ENCODE measurements at regions of chr20 and their contacts with region 1.

Region 1: DNA sequence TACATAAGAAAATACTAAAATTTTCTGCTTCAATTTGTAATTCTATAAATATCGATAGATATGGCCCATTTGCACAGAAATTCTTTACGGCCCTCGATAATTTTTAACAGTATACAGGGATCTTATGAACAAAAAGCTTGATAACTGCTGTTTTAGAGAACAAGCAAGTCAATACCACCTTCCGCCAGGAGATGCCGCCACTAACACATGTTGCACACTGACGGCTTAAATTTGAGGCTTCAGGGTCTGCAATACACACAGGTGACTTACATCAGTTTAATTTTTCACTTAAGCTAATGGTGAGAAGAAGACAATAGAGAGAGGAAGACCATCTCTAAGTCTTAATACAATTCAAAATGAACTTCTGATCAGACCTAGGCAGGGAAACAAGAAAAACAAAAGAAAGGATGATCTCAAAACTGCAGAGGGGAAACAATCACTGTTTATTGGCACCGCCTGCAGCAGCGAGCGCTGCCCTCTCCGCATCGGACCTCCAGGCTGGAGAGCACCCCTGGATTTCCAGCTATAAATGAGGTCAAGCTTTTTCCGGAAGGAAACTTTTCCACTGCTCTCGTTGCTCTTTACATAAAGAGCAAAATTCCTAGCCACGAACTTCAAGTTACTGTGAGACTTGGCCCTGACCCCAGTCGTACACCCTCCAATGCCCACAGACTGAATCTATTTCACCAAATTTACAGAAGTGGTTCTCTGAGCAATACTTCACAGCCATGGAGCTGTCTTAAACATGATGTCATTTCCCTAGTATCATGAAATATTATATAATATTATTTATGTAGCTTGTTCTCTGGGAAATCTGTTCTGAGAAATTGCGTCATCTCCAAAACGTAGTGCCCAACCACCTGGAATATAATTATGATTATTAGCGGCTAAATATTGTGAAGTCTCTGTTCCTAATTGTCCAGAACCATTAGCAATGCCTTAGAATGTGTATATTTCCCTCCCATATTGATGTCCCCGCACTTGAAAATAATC is 54.1 kb downstream of the OTOR start:
- DNase-seq: peak; percentile 49 to 93
- H3K4me3 ChIP-seq: no peak overlapping the region
- H3K27ac ChIP-seq: no peak overlapping the region
- H3K4me1 ChIP-seq: no peaks in the 10 kb centered on the region
- H3K27me3 ChIP-seq: no peaks in the 10 kb centered on the region
- CTCF ChIP-seq: peak; percentile 63 to 81 (median 78)
- EP300 ChIP-seq: no peak
- POLR2A ChIP-seq: no peak
- RAD21 ChIP-seq: peak; percentile 92 to 94

Region 2: DNA sequence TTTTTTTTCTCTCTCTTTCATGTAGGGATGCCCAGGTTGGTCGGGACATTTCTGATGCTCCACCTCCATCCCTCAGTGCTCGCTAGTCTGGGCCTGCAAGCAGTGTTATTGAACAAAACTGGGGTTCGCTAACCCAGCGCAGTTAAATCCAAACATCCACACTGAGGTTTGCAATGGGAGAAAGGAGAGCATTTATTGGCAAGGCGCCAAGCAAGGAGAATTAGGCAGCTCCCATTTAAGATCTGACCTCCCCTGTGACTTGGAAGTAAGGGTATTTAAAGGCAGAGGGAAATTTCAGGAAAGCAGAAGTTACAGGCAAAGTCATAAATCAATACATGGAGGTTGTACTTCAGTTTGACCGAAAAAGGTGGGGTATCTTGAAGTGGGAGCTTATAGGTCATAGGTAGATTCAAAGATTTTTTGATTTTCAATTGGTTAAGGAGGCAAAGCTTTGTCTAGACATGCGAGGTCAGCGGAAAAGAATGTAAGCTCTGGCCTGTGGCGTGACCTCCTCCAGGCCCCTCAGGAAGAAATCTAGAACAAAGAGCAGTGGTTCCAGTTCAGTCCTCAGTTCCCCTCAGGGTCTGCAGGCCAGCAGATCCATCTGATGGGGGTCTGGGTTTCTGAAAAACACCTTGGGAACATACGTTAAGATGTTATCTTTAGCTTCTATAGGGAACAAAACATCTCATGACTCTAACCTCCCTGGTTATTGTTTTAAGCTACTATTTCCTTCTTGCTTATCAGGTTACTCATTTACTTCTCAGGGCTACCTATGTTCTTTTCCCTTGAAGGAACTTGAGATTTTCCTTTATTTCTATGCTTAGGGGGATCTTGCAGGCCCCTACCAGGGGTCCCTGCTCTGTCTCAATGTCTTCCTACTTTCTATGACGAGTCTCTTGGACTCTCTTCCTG is 162.9 kb before region 1 on chr20:
- CTCF ChIA-PET with region 1: no interaction called
- POLR2A ChIA-PET with region 1: no interaction called
- DNase-seq: no peak
- H3K4me3 ChIP-seq: no peak overlapping the region
- H3K27ac ChIP-seq: no peak overlapping the region
- H3K4me1 ChIP-seq: no peaks in the 10 kb centered on the region
- H3K27me3 ChIP-seq: no peaks in the 10 kb centered on the region
- CTCF ChIP-seq: no peak
- EP300 ChIP-seq: no peak
- POLR2A ChIP-seq: no peak
- RAD21 ChIP-seq: no peak

Region 3: DNA sequence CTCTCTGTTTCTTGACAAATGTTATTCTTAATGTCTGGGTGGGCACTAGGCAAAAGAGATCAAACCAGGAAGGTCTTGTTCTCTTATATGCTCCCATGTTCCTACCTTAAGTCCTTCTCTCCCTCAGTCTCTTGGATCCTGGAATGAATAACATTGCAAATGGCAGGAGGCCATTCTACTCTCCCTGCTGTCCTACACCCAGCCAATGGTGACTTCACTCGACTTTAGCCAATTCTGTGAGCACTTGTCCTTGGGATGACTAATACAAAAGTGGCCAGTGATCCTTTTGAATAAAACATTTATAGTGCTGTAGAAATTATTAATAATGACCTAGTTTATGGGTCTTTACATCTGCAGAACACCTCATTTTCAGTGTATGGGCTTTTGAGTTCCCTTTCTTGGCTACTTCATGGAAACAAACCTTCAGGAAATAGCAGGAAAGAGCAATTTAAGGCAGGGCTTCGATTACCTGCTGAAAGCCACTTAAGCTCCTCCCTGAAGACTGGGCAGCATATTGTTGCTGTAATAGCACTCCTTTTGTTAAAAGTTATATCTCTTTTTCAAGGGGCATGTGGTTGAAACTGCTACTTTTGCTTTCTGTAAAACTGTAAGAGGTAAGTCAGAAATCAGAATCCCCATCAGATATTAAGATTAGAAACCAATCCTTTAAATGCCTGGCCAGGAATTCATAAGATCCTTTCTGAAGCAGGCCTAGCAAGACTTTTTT is 43.6 kb before region 1 on chr20:
- CTCF ChIA-PET with region 1: no interaction called
- POLR2A ChIA-PET with region 1: no interaction called
- DNase-seq: no peak
- H3K4me3 ChIP-seq: no peak overlapping the region
- H3K27ac ChIP-seq: no peak overlapping the region
- H3K4me1 ChIP-seq: peaks cover 0 to 10% (median 2%) of the 10 kb centered on the region in 4 experiments; a peak in 2 of 7 replicates
- H3K27me3 ChIP-seq: no peaks in the 10 kb centered on the region
- CTCF ChIP-seq: no peak
- EP300 ChIP-seq: no peak
- POLR2A ChIP-seq: no peak
- RAD21 ChIP-seq: no peak

Region 4: GRCh38 chr20:16816192-16816591 is 14.0 kb after region 1 on chr20:
- CTCF ChIA-PET with region 1: interaction called, 133 read pairs
- POLR2A ChIA-PET with region 1: no interaction called
- DNase-seq: peak; percentile 10 to 54
- H3K4me3 ChIP-seq: no peak overlapping the region
- H3K27ac ChIP-seq: no peak overlapping the region
- H3K4me1 ChIP-seq: peaks cover 0 to 8% (median 2%) of the 10 kb centered on the region in 4 experiments; a peak in 2 of 7 replicates
- H3K27me3 ChIP-seq: no peaks in the 10 kb centered on the region
- CTCF ChIP-seq: peak; percentile 14 to 48 (median 32); a peak in 3 of 4 replicates
- EP300 ChIP-seq: no peak
- POLR2A ChIP-seq: no peak
- RAD21 ChIP-seq: peak; percentile 34 to 50; a peak in 3 of 4 replicates

Region 5: GRCh38 chr20:17226410-17227218 is 424.4 kb after region 1 on chr20 and contains the start of gene PCSK2:
- CTCF ChIA-PET with region 1: interaction called, 16 read pairs
- POLR2A ChIA-PET with region 1: no interaction called
- DNase-seq: peak; percentile 60 to 88
- H3K4me3 ChIP-seq: peak within 1 kb of the TSS; percentile 46 to 72 (median 66)
- H3K27ac ChIP-seq: no peak within 1 kb of the TSS
- H3K4me1 ChIP-seq: peaks cover 3 to 16% (median 11%) of the 10 kb centered on the region in 4 experiments
- H3K27me3 ChIP-seq: peaks cover 1 to 33% (median 29%) of the 10 kb centered on the region in 4 experiments
- CTCF ChIP-seq: no peak
- EP300 ChIP-seq: no peak
- POLR2A ChIP-seq: peak in 1 of 2 experiments; percentile 60; a peak in 2 of 3 replicates
- RAD21 ChIP-seq: peak in 1 of 2 experiments; percentile 27; a peak in 2 of 4 replicates
- total RNA-seq, gene PCSK2: 1.9 and 2.1 TPM in 2 replicates

Region 6: DNA sequence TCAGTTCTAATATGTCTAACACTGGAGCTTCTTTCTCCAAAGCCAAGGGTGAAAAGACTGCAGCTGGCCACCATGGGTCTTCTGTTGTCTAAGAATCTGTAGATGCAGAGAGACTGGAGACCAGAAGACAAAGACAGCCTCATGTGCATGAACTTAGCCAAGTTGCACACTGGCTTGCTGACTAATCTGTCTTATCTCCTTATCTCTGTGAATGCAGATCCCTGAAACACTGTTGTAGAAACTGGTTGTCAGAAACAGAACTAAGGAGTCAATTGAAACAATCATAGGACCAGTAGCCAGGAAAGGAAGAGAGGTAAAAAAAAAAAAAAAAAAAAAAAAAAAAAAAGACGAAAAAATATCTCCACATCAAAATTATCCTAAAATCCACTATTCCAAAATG is 619.3 kb after region 1 on chr20:
- CTCF ChIA-PET with region 1: interaction called, 10 read pairs
- POLR2A ChIA-PET with region 1: no interaction called
- DNase-seq: no peak
- H3K4me3 ChIP-seq: no peak overlapping the region
- H3K27ac ChIP-seq: no peak overlapping the region
- H3K4me1 ChIP-seq: peaks cover 0 to 4% (median 2%) of the 10 kb centered on the region in 4 experiments; a peak in 1 of 7 replicates
- H3K27me3 ChIP-seq: no peaks in the 10 kb centered on the region
- CTCF ChIP-seq: no peak
- EP300 ChIP-seq: no peak
- POLR2A ChIP-seq: no peak
- RAD21 ChIP-seq: no peak

Region 7: GRCh38 chr20:17504898-17505635 is 702.9 kb after region 1 on chr20:
- CTCF ChIA-PET with region 1: interaction called, 10 read pairs
- POLR2A ChIA-PET with region 1: no interaction called
- DNase-seq: peak in 1 of 2 experiments; percentile 81
- H3K4me3 ChIP-seq: peak overlapping the region; percentile 4 to 55 (median 44); a peak in 7 of 8 replicates
- H3K27ac ChIP-seq: no peak overlapping the region
- H3K4me1 ChIP-seq: peaks cover 0 to 10% (median 3%) of the 10 kb centered on the region in 4 experiments; a peak in 4 of 7 replicates
- H3K27me3 ChIP-seq: peaks cover 0 to 9% (median 1%) of the 10 kb centered on the region in 4 experiments; a peak in 3 of 7 replicates
- CTCF ChIP-seq: peak in 2 of 3 experiments; percentile 45 to 50; a peak in 2 of 4 replicates
- EP300 ChIP-seq: no peak
- POLR2A ChIP-seq: no peak; a peak in 1 of 3 replicates
- RAD21 ChIP-seq: peak; percentile 71 to 83